Endothelial cell of umbilical vein (primary cell): ENCODE measurements at regions of chr6 and their contacts with region 1.

Region 1: DNA sequence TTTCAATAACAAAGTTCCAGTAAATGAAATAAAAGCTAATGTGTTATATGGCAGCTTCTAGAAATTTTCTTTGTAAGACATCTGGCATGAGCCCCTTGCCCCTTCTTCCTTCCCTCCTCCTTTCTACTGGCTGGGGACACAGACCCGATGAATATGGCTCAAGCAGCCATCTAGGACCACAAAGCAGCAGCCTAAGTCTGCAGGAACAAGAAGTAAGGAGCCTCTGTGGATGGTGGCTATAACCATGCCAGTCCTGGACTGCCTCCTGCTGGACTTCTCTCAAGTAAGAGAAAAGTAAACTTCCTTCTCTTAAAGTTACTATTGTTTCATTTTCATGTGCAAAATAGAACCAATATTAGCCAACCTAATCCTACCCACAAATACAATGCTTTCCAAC is 114.9 kb upstream of the DST start:
- DNase-seq: peak; percentile 76
- H3K4me3 ChIP-seq: no peak overlapping the region
- H3K27ac ChIP-seq: no peak overlapping the region
- H3K4me1 ChIP-seq: no peaks in the 10 kb centered on the region
- H3K27me3 ChIP-seq: no peaks in the 10 kb centered on the region
- CTCF ChIP-seq: peak; percentile 36 to 45
- POLR2A ChIP-seq: no peak

Region 2: DNA sequence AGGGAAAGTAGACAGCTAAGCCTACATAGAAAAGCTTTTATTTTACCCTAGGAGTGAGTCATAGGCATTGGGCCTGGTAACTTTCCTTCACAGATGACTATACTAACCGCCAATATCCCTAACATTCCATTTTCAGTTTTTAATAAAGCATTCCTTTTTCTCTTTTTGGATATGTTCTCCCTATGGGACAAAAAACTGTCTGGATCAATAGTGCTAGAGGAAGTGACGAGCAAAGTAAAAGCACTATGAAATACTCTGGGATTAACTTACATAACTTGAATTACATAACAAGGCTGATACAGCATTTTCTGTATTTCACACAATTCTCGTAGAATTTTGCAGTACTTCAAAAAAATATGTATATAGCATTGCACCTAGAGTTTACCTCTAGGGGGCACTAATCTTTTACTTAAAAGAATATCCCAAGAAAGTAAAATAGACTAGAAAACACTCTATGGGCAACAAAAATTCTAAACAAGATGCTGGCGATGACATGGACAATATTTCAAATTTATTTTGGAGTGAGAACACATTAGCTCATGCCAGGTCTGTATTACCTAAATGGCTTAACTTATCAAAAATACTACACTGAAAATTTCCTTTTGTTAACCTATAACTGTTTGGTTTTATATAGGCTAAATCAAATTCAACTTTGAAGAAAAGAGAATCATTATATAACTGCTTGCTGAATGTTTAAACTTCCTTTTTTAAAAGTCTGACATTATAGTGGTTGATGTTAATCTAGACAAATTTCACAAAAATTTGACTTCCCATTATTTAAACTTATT is 48.6 kb before region 1 on chr6:
- CTCF ChIA-PET with region 1: interaction called, 174 read pairs
- POLR2A ChIA-PET with region 1: no interaction called
- dilution Hi-C with region 1: no loop called
- intact Hi-C with region 1: loop called (anchors 1 kb)
- DNase-seq: peak; percentile 73
- H3K4me3 ChIP-seq: peak overlapping the region in 1 of 3 experiments; percentile 15
- H3K27ac ChIP-seq: peak overlapping the region; percentile 69
- H3K4me1 ChIP-seq: peaks cover 30% of the 10 kb centered on the region
- H3K27me3 ChIP-seq: no peaks in the 10 kb centered on the region
- CTCF ChIP-seq: peak; percentile 30 to 40
- POLR2A ChIP-seq: no peak

Region 3: GRCh38 chr6:56744528-56744927 is 13.1 kb before region 1 on chr6:
- CTCF ChIA-PET with region 1: interaction called, 13 read pairs
- POLR2A ChIA-PET with region 1: no interaction called
- dilution Hi-C with region 1: no loop called
- intact Hi-C with region 1: no loop called
- DNase-seq: no peak
- H3K4me3 ChIP-seq: no peak overlapping the region
- H3K27ac ChIP-seq: no peak overlapping the region
- H3K4me1 ChIP-seq: peaks cover 4% of the 10 kb centered on the region
- H3K27me3 ChIP-seq: no peaks in the 10 kb centered on the region
- CTCF ChIP-seq: no peak
- POLR2A ChIP-seq: no peak

Region 4: DNA sequence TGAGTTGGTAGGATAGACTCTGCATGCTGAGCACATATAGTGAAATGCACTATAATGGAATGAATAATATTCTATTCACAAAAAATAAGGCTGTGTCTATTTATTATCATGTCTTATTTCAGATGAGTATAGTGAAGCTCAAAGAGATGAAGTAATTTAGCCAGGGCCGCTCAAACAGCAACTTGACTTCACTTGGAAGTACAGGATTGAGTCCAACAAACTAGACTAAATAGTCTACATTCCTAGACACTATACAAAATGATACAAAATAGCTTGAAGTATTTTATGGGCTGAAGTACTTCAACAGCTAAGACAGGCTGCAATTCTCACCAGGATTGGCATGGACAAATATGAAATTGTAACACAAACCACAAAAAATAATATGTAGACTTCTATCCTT is 29.6 kb after region 1 on chr6:
- CTCF ChIA-PET with region 1: no interaction called
- POLR2A ChIA-PET with region 1: no interaction called
- dilution Hi-C with region 1: no loop called
- intact Hi-C with region 1: no loop called
- DNase-seq: no peak
- H3K4me3 ChIP-seq: no peak overlapping the region
- H3K27ac ChIP-seq: no peak overlapping the region
- H3K4me1 ChIP-seq: no peaks in the 10 kb centered on the region
- H3K27me3 ChIP-seq: no peaks in the 10 kb centered on the region
- CTCF ChIP-seq: no peak
- POLR2A ChIP-seq: no peak

Region 5: DNA sequence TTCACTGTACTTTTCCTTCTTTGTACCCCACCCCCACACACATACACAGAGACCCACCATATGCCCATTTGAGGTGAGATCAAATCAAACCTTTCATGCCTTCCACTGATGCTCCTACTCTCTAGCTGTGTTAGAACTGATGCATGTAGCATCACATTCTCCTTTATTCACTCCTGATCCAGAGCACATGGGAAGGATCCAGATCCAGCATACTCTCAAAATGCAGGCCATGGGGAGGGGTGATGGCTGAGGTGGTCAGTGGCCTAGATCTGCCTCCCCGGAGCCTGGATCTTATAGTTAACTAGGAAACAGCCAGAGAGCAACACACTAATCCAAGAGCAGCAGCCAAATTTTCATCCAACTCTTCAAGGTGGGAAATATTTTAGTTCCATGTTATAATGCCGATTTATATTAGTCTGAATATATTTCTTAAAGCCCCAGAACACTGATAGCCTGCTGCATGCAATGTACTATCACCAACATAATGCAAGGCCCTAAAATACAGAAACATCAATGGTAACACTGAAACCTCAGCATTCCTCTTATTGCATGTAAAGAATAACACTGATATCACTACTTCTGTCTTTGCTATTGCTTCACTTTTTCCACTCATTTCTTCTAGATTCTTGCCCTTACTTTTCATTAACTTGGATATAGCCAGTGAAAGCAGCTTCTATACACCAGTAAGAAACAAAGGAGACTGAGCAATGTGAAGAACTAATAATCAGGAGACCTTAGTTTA is 70.5 kb after region 1 on chr6:
- CTCF ChIA-PET with region 1: no interaction called
- POLR2A ChIA-PET with region 1: no interaction called
- dilution Hi-C with region 1: no loop called
- intact Hi-C with region 1: no loop called
- DNase-seq: no peak
- H3K4me3 ChIP-seq: no peak overlapping the region
- H3K27ac ChIP-seq: no peak overlapping the region
- H3K4me1 ChIP-seq: no peaks in the 10 kb centered on the region
- H3K27me3 ChIP-seq: no peaks in the 10 kb centered on the region
- CTCF ChIP-seq: no peak
- POLR2A ChIP-seq: no peak

Region 6: GRCh38 chr6:56955171-56956045 is 197.8 kb after region 1 on chr6:
- CTCF ChIA-PET with region 1: no interaction called
- POLR2A ChIA-PET with region 1: no interaction called
- dilution Hi-C with region 1: no loop called
- intact Hi-C with region 1: no loop called
- DNase-seq: peak; percentile 83
- H3K4me3 ChIP-seq: peak overlapping the region; percentile 43 to 83 (median 75)
- H3K27ac ChIP-seq: peak overlapping the region; percentile 52
- H3K4me1 ChIP-seq: peaks cover 17% of the 10 kb centered on the region
- H3K27me3 ChIP-seq: no peaks in the 10 kb centered on the region
- CTCF ChIP-seq: peak; percentile 82 to 88
- POLR2A ChIP-seq: no peak